Keratinocyte (primary cell): ENCODE measurements at regions of chr1 and their contacts with region 1.

Region 1: GRCh38 chr1:167288390-167289074 is 67.8 kb downstream of the POU2F1 start:
- DNase-seq: no peak
- H3K4me3 ChIP-seq: no peak overlapping the region
- H3K27ac ChIP-seq: no peak overlapping the region
- H3K4me1 ChIP-seq: no peaks in the 10 kb centered on the region
- H3K27me3 ChIP-seq: no peaks in the 10 kb centered on the region
- CTCF ChIP-seq: no peak

Region 2: DNA sequence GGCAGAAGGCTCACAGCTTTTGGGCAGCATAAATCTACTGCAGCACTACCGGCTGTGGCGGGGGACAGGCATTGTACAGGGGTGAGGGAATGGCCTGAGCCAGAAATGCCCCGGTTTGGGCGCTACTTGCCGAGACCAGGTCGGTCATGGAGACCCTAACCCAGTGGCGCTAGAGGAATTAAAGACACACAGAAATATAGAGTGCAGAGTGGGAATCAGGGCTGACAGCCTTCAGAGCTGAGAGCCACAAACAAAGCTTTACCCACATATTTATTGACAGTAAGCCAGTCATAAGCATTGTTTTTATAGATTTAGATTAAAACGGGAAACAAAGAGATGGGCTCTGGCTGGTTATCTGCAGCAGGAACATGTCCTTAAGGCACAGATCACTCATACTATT is 34.0 kb after region 1 on chr1:
- dilution Hi-C with region 1: loop called (anchors 5 kb)
- DNase-seq: no peak
- H3K4me3 ChIP-seq: no peak overlapping the region
- H3K27ac ChIP-seq: no peak overlapping the region
- H3K4me1 ChIP-seq: no peaks in the 10 kb centered on the region
- H3K27me3 ChIP-seq: no peaks in the 10 kb centered on the region
- CTCF ChIP-seq: no peak

Region 3: DNA sequence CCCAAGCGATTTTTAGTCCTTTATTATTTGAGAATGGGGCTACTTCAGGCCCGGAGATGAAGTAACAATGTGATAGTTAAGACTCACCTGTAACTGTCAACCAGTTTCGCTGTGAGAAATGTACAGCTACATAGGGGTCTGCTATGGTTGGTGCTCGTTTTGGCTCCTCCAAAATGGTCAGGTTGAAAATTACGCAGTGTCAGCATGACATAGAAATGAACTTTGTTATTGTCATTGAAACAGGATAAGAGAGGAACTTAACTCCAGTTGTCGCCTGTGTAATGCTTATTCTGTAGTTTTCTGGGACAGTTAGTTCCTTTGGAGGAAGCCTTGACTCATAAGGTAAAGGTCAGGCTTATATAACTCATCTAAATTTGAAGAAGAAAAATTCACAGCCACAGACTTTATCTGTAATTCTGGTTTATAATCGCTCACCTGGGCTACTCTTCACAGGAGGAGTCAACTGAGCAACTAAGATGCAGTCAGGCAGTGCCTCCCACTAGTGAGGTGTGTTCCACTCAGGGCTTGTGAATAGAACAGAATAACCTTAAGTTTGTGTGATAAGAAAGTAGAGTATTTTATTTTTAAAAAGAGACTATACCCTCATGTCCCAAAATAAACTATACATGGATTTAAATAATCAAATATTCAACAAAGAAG is 98.8 kb after region 1 on chr1:
- dilution Hi-C with region 1: no loop called
- DNase-seq: no peak
- H3K4me3 ChIP-seq: no peak overlapping the region
- H3K27ac ChIP-seq: no peak overlapping the region
- H3K4me1 ChIP-seq: no peaks in the 10 kb centered on the region
- H3K27me3 ChIP-seq: no peaks in the 10 kb centered on the region
- CTCF ChIP-seq: no peak